ENCODE measurements at regions of chr3 and their contacts with region 1.

Region 1: DNA sequence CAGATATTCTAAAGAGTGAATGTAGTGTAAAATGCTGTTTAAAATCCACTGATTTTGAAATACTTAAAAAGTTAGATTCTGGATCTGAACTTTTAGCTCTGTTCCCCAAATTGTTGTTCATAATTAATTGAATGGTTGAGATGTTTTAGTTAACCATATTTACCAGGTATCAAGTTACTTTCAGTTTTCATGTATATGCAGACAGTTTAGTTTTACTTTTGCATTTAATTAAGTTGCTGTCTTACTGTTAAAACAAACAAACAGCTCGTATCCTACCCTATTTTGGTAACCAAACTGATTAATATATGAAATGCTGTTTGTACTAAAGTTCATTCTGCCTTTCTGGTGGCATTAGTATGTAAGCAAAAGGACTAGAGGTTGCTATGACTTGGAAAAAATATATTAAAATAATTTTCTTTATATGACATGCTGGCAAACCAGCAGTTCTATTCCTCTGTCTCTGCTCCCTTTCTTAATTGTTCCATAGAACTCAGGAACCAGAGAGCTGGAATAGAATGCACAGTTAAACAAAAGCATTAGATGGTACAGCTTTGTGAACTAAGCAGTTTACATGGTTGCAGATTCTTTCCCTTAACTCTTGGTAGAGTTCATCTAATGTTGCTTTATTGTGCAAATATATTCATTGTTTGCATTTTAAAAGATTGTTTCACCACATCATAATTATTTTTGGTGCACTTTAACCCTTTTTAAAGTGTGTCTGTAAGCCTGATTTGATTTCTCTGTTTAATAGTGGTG is 39.5 kb upstream of the SCAANT1 start:
- DNase-seq: no peak
- ATAC-seq: no peak
- H3K4me3 ChIP-seq: no peak overlapping the region
- H3K4me3 Mint-ChIP-seq: peak overlapping the region in 6 of 10 donors; percentile 40 to 76 (median 56)
- H3K27ac ChIP-seq: peak overlapping the region; percentile 15
- H3K27ac Mint-ChIP-seq: peak overlapping the region; percentile 8 to 90 (median 50)
- H3K4me1 ChIP-seq: peaks cover 13 to 28% of the 10 kb centered on the region in 2 donors
- H3K4me1 Mint-ChIP-seq: peaks cover 22 to 54% (median 47%) of the 10 kb centered on the region in 7 donors
- H3K27me3 ChIP-seq: no peaks in the 10 kb centered on the region
- H3K27me3 Mint-ChIP-seq: no peaks in the 10 kb centered on the region

Region 2: GRCh38 chr3:63933459-63933858 is 18.2 kb before region 1 on chr3:
- CTCF ChIA-PET with region 1: no interaction called
- POLR2A ChIA-PET with region 1: no interaction called
- intact Hi-C with region 1: loop called in 1 of 2 experiments (anchors 2 kb)
- DNase-seq: no peak
- ATAC-seq: peak; percentile 14
- H3K4me3 ChIP-seq: no peak overlapping the region
- H3K4me3 Mint-ChIP-seq: peak overlapping the region in 3 of 10 donors; percentile 7 to 59 (median 15)
- H3K27ac ChIP-seq: no peak overlapping the region
- H3K27ac Mint-ChIP-seq: peak overlapping the region in 5 of 9 donors; percentile 4 to 79 (median 34)
- H3K4me1 ChIP-seq: peaks cover 9 to 30% of the 10 kb centered on the region in 2 donors
- H3K4me1 Mint-ChIP-seq: peaks cover 56 to 78% (median 68%) of the 10 kb centered on the region in 7 donors
- H3K27me3 ChIP-seq: no peaks in the 10 kb centered on the region
- H3K27me3 Mint-ChIP-seq: no peaks in the 10 kb centered on the region

Measured in naive thymus-derived CD4-positive, alpha-beta T cell (primary cell).